Cardiac septum (tissue), 1 donor: ENCODE measurements at regions of chr1 and their contacts with region 1.

Region 1: DNA sequence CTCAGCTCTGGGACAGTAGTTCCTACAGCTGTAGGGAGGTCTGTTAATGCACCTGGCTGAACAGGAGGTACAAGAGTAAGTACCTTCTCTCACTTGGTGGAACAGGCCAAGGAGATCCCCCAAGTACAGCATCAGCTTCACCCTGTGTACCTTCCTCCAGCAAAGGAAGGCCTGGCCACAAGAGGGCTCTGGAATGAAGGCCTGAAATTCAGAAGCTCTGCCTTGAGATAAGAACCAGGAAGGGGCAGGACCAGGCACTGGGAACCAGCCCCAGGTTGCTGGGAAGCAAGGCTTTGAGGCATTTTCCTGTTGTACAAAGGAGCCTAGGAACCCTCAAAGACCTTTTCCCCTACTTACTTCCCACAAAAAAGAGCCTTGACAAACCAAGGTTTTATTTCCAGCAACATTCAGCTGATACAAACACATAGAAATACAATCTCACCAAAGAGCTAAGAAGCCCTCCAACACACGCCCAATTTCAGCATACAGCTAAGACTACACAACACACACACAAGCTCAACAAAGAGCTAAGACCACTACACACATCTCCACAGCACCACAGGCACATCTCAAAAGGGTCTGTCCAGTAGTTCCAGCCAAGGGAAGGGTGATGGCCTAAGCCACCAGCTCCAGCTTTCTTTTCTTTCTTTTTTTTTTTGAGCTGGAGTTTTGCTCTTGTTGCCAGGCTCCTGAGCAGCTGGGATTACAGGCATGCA is 23.5 kb downstream of the F11R start:
- DNase-seq: peak; percentile 80

Region 2: GRCh38 chr1:161013488-161014230 is 16.2 kb after region 1 on chr1:
- intact Hi-C with region 1: loop called (anchors 2 kb)
- DNase-seq: peak; percentile 94

Region 3: GRCh38 chr1:161045750-161046571 is 48.5 kb after region 1 on chr1 and contains the start of gene USF1:
- intact Hi-C with region 1: loop called (anchors 10 kb)
- DNase-seq: peak; percentile 96
- total RNA-seq, gene USF1: 29.2 TPM

Region 4: GRCh38 chr1:161098210-161099068 is 101.0 kb after region 1 on chr1 and contains the start of gene KLHDC9:
- intact Hi-C with region 1: loop called (anchors 2 kb)
- DNase-seq: peak; percentile 83
- total RNA-seq, gene KLHDC9: 10.7 TPM

Region 5: GRCh38 chr1:161185282-161185682 is 187.8 kb after region 1 on chr1:
- intact Hi-C with region 1: no loop called
- DNase-seq: no peak